Adrenal gland (tissue), 19 donors: ENCODE measurements at regions of chr6 and their contacts with region 1.

Region 1: GRCh38 chr6:55980627-55981211 is 105.3 kb upstream of the BMP5 start:
- DNase-seq: peak in 4 of 7 donors; percentile 25 to 47 (median 34)
- H3K4me3 ChIP-seq: no peak overlapping the region
- H3K27ac ChIP-seq: no peak overlapping the region
- H3K4me1 ChIP-seq: no peaks in the 10 kb centered on the region
- H3K27me3 ChIP-seq: no peaks in the 10 kb centered on the region
- CTCF ChIP-seq: peak; percentile 45 to 81 (median 68)
- POLR2A ChIP-seq: no peak

Region 2: GRCh38 chr6:56292505-56293181 is 311.9 kb after region 1 on chr6:
- intact Hi-C with region 1: loop called (anchors 5 kb)
- DNase-seq: peak; percentile 16 to 55 (median 41)
- H3K4me3 ChIP-seq: no peak overlapping the region
- H3K27ac ChIP-seq: no peak overlapping the region
- H3K4me1 ChIP-seq: peaks cover 0 to 5% of the 10 kb centered on the region in 2 donors
- H3K27me3 ChIP-seq: no peaks in the 10 kb centered on the region
- CTCF ChIP-seq: peak; percentile 25 to 79 (median 70)
- POLR2A ChIP-seq: no peak